Posterior vena cava (tissue), 2 donors: ENCODE measurements at regions of chr3 and their contacts with region 1.

Region 1: GRCh38 chr3:4712143-4712542 is 219.0 kb downstream of the ITPR1 start:
- DNase-seq: no peak

Region 2: DNA sequence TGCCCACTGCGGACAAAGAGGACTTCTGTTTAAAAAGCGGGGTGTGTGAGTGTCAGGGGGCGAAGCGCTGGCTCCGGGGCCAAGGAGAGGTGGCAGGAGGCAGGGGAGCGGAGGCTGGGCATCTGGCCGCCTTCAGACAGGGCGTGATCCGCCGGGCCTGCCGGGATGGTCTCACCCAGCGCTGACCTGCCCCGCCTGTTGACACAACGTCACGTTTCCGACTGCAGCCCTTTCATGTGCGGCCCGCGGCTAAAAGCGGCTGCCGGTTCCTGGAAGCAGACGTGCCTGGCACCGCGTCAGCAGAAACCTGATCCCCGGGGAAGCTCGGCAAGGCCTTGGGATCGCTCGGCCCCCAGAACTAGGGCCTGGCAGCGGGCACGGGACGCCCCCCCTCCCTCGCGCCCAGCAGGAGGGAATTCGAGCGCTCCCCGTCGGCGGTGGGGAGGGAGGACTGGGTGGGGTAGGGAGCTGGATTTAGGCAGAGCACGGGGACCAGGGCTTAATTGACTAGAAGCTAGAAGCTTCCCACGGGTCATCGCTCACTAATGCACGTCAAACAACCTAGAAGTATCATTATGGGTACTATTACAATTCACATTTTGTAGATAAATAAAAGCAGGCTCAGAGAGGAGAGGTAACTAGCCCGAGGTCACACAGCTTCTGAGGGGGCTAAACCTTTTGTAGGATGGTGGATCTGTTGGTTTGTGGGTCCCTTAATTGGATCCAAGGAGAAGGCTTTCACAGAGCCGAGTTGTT is 274.8 kb after region 1 on chr3:
- intact Hi-C with region 1: loop called in 1 of 2 experiments (anchors 10 kb)
- DNase-seq: peak; percentile 99

Region 3: GRCh38 chr3:5026331-5027218 is 314.4 kb after region 1 on chr3:
- intact Hi-C with region 1: loop called in 1 of 2 experiments (anchors 2 kb)
- DNase-seq: peak; percentile 98

Region 4: DNA sequence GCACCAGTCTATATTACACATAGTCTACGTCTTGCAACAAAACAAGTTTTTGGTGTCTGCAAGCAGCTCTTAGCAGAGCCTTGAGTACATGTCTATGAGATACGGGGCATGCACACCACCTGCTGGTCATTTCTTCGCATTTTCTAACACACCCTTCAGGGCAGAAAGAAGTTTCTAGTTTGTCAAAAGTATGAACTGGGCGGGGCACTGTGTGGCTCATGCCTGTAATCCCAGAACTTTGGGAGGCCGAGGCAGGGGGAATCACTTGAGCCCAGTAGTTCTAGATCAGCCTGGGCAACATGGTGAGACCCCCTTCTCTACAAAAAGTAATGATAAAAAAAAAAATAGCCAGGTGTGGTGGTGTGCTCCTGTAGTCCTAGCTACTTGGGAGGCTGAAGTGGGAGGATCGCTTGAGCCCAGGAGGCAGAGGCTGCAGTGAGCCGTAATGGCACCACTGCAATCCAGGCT is 345.7 kb after region 1 on chr3:
- intact Hi-C with region 1: loop called in 1 of 2 experiments (anchors 5 kb)
- DNase-seq: peak; percentile 84